Calu3 (cell line): ENCODE measurements at regions of chr6 and their contacts with region 1.

Region 1: GRCh38 chr6:34546551-34547321 is 9.4 kb downstream of the SPDEF start:
- DNase-seq: peak; percentile 83
- H3K4me3 Mint-ChIP-seq: peak overlapping the region; percentile 20
- H3K27ac Mint-ChIP-seq: peak overlapping the region; percentile 30
- H3K4me1 Mint-ChIP-seq: peaks cover 45% of the 10 kb centered on the region
- H3K27me3 Mint-ChIP-seq: no peaks in the 10 kb centered on the region
- CTCF ChIP-seq: peak; percentile 24

Region 2: GRCh38 chr6:34113532-34113931 is 433.2 kb before region 1 on chr6:
- CTCF ChIA-PET with region 1: interaction called, 10 read pairs
- intact Hi-C with region 1: no loop called
- DNase-seq: no peak
- H3K4me3 Mint-ChIP-seq: no peak overlapping the region
- H3K27ac Mint-ChIP-seq: no peak overlapping the region
- H3K4me1 Mint-ChIP-seq: no peaks in the 10 kb centered on the region
- H3K27me3 Mint-ChIP-seq: peaks cover 100% of the 10 kb centered on the region
- CTCF ChIP-seq: no peak

Region 3: DNA sequence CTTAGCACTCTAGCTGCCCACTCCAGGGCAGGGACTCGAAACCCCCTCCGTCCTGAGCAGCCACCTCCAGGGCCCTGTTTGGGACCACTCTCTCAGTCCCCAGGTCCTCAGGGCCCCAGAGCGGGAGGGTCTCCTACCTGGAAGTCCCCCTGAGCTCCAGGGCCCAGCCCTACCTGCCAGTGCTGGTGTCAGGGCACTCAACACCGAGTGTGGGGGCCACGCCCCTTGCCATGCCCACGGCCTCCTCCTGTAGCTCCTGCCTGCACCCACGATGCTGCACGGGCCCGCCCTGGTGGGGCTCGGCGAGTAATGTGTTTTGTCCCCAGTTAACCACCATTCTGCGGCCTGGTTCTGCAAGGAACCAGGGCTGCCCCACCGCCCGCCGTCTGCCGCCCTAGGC is 12.1 kb before region 1 on chr6:
- CTCF ChIA-PET with region 1: interaction called, 11 read pairs
- intact Hi-C with region 1: no loop called
- DNase-seq: no peak
- H3K4me3 Mint-ChIP-seq: no peak overlapping the region
- H3K27ac Mint-ChIP-seq: no peak overlapping the region
- H3K4me1 Mint-ChIP-seq: peaks cover 15% of the 10 kb centered on the region
- H3K27me3 Mint-ChIP-seq: peaks cover 6% of the 10 kb centered on the region
- CTCF ChIP-seq: no peak